ENCODE measurements at regions of chr15 and their contacts with region 1.

Region 1: DNA sequence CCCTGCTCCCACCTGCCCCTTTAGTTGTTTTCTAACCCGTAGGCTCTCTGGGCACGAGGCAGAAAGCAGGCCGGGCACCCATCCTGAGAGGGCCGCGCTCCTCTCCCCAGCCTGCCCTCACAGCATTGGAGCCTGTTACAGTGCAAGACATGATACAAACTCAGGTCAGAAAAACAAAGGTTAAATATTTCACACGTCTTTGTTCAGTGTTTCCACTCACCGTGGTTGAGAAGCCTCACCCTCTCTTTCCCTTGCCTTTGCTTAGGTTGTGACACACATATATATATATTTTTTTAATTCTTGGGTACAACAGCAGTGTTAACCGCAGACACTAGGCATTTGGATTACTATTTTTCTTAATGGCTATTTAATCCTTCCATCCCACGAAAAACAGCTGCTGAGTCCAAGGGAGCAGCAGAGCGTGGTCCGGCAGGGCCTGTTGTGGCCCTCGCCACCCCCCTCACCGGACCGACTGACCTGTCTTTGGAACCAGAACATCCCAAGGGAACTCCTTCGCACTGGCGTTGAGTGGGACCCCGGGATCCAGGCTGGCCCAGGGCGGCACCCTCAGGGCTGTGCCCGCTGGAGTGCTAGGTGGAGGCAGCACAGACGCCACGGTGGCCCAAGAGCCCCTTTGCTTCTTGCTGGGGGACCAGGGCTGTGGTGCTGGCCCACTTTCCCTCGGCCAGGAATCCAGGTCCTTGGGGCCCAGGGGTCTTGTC is 48.5 kb downstream of the PGPEP1L start:
- DNase-seq: no peak

Region 2: GRCh38 chr15:98983333-98983732 is 24.3 kb after region 1 on chr15:
- intact Hi-C with region 1: loop called in 1 of 2 experiments (anchors 1 kb)
- DNase-seq: no peak

Region 3: DNA sequence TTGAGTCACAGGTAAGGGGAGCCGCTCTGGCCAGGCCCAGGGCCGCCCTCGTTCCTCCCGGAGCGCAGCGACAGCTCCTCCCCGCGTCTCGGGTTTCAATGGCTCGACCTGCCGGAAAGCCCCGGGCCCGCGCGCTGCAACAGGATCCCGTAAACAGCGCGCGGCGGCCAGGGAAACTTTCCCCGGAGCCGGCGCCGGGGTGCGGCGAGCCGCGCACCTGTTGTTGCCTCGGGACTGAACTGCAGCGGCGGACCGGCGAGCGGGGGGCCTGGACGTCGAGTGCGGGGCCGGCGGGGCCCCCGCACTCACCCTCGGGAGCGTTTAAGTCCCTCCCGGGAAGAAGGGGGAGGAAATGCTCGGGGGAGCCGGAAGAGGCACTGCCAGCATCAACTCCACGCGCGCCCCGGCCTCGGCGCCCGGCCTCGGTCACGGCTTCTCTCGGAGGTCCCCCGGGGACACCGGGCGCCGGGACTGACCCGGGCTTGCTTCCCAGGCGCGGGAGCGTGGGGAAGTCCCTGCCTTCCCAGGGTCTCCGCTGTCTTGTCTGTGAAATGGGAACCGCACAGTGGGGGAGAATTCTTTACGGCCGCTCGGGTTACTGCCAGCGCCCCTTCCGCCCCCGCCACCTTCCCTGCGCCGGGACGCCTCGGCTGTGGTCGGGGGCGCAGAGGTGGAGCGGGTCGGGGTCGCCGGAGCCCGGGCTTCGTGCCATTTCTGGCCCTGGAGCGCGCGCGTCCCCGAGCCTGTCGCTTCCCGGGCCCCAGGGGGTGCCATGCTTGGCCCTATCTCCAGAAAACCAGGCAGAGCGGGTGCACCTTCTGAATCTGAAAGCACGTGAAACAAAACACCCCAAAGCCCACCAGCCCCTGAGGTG is 56.0 kb after region 1 on chr15:
- intact Hi-C with region 1: no loop called
- DNase-seq: no peak

Measured in posterior vena cava (tissue), 2 donors.